Activated T-helper 1 cell treated with anti-CD3 and anti-CD28 coated beads, Interleukin-12 subunit alpha, Interleukin-12 subunit beta, Interleukin-2, Interleukin-4 antibody, amounts not matched to agents 30 ng/mL and 10 ng/mL and 1 ng/mL, durations not matched to agents 14 hours and 24 hours and 36 hours (primary cell): ENCODE measurements at regions of chr12 and their contacts with region 1.

Region 1: DNA sequence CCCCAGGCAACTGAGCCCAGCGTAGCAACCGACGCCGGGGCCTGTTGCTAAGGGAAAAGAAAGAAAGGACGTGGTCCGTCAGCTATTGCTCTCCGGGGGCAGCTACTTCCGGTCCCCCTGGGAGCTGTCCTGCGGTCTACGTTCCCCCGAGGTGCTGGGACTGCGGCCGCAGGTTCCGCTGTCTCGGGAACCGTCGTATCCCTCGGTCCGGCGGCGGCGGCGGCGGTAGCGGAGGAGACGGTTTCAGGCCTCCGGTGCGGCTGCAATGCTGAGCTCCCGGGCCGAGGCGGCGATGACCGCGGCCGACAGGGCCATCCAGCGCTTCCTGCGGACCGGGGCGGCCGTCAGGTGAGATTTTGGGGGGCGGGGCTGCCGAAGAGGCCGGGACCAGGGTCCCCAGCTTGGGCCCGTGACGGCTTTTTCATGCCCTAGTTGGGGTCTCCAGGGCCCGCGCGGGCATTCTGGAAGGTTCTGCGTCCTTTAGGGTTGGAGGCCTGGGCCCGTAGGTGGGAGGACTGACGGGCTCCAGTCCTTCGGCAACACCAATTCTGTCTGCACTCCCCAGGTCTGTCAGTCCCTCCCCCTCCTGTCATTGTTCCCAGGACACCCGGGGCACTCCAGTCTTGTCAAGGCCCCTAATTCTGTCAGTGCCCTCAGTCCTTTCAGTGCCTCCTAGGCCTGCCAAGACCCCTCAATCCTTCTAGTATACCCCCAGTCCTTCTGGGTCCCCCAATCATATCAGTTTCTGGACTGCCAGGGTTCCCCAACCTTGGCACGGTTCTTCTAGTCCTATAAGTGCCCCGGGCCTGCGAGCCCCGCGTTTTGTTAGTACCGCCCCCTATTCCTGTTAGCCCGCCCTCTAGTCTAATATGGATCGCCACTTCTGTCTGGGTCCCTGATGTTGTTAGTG is at the start of gene USP30:
- DNase-seq: peak; percentile 77
- H3K4me3 Mint-ChIP-seq: peak within 1 kb of the TSS; percentile 92
- H3K27ac Mint-ChIP-seq: peak within 1 kb of the TSS; percentile 92
- H3K4me1 Mint-ChIP-seq: peaks cover 19% of the 10 kb centered on the region
- H3K27me3 Mint-ChIP-seq: no peaks in the 10 kb centered on the region
- total RNA-seq, gene USP30: 9.0 and 10.5 TPM in 2 replicates

Region 2: DNA sequence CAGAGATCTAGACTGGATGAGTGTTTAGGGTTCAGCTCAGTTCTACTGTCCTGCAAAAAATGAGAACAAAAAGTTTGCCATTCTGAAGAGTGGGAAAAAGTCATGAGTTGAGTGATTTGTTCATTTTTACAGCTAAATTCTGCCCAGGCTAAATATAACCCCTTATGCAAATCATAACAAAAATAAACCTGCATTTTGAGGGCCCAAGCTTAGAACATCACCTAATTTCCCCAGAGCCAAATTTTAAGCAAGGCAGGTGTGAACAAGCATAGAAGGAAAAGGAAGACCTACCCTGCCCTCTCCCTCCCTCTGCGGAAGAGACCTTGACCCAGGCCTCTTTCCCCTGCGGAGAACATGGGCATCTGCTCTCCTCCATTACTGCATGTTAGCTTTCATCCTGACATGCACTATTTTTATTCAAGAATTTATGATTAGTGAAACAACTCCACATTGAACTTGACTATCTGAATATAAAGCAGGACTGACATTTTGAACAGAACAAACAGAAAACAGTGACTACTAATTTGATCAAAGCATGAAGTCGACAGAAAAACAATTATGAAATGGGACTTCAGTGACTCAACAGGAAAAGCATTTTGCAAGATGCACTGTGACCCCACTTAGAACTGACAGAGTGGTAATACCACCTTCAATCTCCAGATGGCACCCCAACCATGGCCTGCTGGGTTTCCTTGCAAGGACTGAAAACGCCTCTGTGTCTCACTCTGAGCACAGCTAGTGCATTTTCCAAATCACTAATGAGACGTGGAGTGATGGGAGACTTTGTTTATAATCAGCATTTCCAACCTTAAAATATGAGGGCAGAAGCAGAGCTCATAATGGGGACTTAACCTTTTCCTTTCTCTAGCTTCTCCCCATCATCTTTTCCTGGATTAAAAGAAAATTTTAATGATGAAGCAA is 388.1 kb before region 1 on chr12:
- intact Hi-C with region 1: loop called (anchors 2 kb)
- DNase-seq: peak; percentile 79
- H3K4me3 Mint-ChIP-seq: no peak overlapping the region
- H3K27ac Mint-ChIP-seq: peak overlapping the region; percentile 72
- H3K4me1 Mint-ChIP-seq: peaks cover 17% of the 10 kb centered on the region
- H3K27me3 Mint-ChIP-seq: no peaks in the 10 kb centered on the region

Region 3: GRCh38 chr12:108731105-108731865 is 321.4 kb before region 1 on chr12 and contains the start of gene CORO1C:
- intact Hi-C with region 1: loop called (anchors 1 kb)
- DNase-seq: peak; percentile 96
- H3K4me3 Mint-ChIP-seq: peak within 1 kb of the TSS; percentile 89
- H3K27ac Mint-ChIP-seq: peak within 1 kb of the TSS; percentile 94
- H3K4me1 Mint-ChIP-seq: peaks cover 38% of the 10 kb centered on the region
- H3K27me3 Mint-ChIP-seq: peaks cover 16% of the 10 kb centered on the region
- total RNA-seq, gene CORO1C: 46.1 and 49.7 TPM in 2 replicates

Region 4: DNA sequence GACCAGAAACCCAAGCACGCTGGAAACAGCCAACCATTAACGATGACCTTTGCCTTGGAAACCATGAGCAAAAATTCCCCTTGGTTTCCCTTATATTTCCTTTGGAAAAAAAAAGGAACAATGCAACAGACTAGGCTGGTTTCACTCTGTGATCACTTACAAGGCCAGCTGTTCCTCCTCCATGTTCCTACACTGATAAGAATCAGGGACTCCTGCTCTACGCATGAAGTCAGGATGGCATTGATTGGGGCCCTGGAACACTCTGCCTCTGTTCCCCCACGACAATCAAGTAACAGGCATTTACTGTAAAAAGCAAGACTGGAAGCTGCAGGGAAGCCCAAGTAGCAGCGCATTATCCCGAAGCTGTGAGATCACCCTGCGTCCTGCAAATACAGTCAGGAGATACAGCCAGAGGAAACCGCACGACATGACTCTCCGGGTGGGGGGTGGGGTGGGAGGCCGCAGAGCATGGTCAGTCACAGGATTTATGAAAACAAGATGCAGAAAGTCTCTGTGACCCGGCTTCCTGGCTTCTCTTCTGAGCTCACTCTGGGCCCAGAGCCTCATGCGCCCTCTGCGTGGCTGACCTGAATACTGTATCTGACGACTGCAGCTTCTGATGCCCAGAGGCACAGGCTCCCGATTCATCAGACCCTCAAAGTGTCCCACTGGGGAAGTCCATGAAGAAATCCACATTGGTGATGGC is 226.4 kb before region 1 on chr12:
- intact Hi-C with region 1: loop called (anchors 5 kb)
- DNase-seq: no peak
- H3K4me3 Mint-ChIP-seq: peak overlapping the region; percentile 48
- H3K27ac Mint-ChIP-seq: peak overlapping the region; percentile 53
- H3K4me1 Mint-ChIP-seq: peaks cover 60% of the 10 kb centered on the region
- H3K27me3 Mint-ChIP-seq: no peaks in the 10 kb centered on the region

Region 5: GRCh38 chr12:108856428-108857157 is 196.1 kb before region 1 on chr12:
- intact Hi-C with region 1: loop called (anchors 1 kb)
- DNase-seq: peak; percentile 45
- H3K4me3 Mint-ChIP-seq: peak overlapping the region; percentile 96
- H3K27ac Mint-ChIP-seq: peak overlapping the region; percentile 96
- H3K4me1 Mint-ChIP-seq: peaks cover 52% of the 10 kb centered on the region
- H3K27me3 Mint-ChIP-seq: peaks cover 10% of the 10 kb centered on the region

Region 6: GRCh38 chr12:109020796-109021380 is 31.8 kb before region 1 on chr12 and contains the start of gene SVOP:
- intact Hi-C with region 1: loop called (anchors 1 kb)
- DNase-seq: peak; percentile 1
- H3K4me3 Mint-ChIP-seq: no peak within 1 kb of the TSS
- H3K27ac Mint-ChIP-seq: no peak within 1 kb of the TSS
- H3K4me1 Mint-ChIP-seq: no peaks in the 10 kb centered on the region
- H3K27me3 Mint-ChIP-seq: peaks cover 7% of the 10 kb centered on the region
- total RNA-seq, gene SVOP: not detected in 2 replicates

Region 7: GRCh38 chr12:109033234-109034196 is 19.2 kb before region 1 on chr12:
- intact Hi-C with region 1: no loop called
- DNase-seq: no peak
- H3K4me3 Mint-ChIP-seq: no peak overlapping the region
- H3K27ac Mint-ChIP-seq: no peak overlapping the region
- H3K4me1 Mint-ChIP-seq: no peaks in the 10 kb centered on the region
- H3K27me3 Mint-ChIP-seq: peaks cover 14% of the 10 kb centered on the region

Region 8: GRCh38 chr12:109154451-109155438 is 102.1 kb after region 1 on chr12:
- intact Hi-C with region 1: loop called (anchors 1 kb)
- DNase-seq: peak; percentile 71
- H3K4me3 Mint-ChIP-seq: peak overlapping the region; percentile 85
- H3K27ac Mint-ChIP-seq: peak overlapping the region; percentile 63
- H3K4me1 Mint-ChIP-seq: peaks cover 17% of the 10 kb centered on the region
- H3K27me3 Mint-ChIP-seq: peaks cover 15% of the 10 kb centered on the region

Region 9: GRCh38 chr12:109302358-109302757 is 249.7 kb after region 1 on chr12:
- intact Hi-C with region 1: no loop called
- DNase-seq: no peak
- H3K4me3 Mint-ChIP-seq: no peak overlapping the region
- H3K27ac Mint-ChIP-seq: no peak overlapping the region
- H3K4me1 Mint-ChIP-seq: no peaks in the 10 kb centered on the region
- H3K27me3 Mint-ChIP-seq: peaks cover 29% of the 10 kb centered on the region